Lower leg skin (tissue), 4 donors: ENCODE measurements at regions of chr4 and their contacts with region 1.

Region 1: GRCh38 chr4:5045097-5045496 is 6.2 kb upstream of the STK32B start:
- DNase-seq: peak; percentile 41 to 82
- H3K4me3 ChIP-seq: no peak overlapping the region
- CTCF ChIP-seq: no peak
- POLR2A ChIP-seq: no peak

Region 2: GRCh38 chr4:5371415-5372190 is 326.5 kb after region 1 on chr4:
- intact Hi-C with region 1: no loop called
- DNase-seq: no peak
- H3K4me3 ChIP-seq: no peak overlapping the region
- CTCF ChIP-seq: no peak
- POLR2A ChIP-seq: no peak

Region 3: GRCh38 chr4:6116696-6117285 is 1071.7 kb after region 1 on chr4:
- intact Hi-C with region 1: loop called (anchors 5 kb)
- DNase-seq: peak in 1 of 2 donors; percentile 67
- H3K4me3 ChIP-seq: no peak overlapping the region
- CTCF ChIP-seq: no peak
- POLR2A ChIP-seq: no peak